Endothelial cell of umbilical vein (primary cell): ENCODE measurements at regions of chr3 and their contacts with region 1.

Region 1: DNA sequence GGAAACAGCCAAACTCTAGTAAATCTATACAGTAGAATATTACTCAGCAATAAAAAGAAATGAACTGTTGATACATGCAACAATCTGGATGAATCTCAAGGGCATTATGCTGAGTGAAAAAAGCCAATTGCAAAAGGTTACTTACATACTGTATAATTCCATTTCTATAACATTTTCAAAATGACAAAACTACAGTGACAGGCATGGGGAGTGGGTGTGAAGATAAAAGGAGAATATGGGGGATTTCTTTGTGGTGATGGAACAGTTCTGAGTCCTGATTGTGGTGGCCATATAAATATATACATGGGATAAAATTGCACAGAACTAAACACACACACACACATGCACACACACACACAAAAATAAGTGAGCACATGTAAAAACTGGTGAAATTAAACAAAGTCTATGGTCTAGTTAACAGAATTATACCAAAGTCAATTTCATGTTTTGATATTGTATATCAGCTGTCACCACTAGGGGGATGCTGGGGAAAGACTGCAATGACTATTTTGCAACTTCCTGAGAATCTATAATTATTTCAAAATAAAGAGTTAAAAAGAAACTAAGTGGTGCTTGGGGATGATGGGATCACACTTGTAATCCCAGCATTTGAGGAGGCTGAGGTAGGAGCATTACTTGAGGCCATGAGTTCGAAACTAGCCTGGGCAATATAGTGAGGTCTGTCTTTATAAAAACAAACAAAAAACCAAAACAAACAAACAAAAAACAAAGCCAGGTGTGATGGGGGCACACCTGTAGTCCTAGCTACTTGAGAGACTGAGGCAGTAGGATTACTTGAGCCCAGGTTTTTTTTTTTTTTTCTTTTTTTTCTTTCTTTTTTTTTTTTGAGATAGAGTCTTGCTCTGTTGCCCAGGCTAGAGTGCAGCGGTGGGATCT is 66.0 kb downstream of the SPTSSB start:
- DNase-seq: peak; percentile 32
- H3K4me3 ChIP-seq: no peak overlapping the region
- H3K27ac ChIP-seq: no peak overlapping the region
- H3K4me1 ChIP-seq: no peaks in the 10 kb centered on the region
- H3K27me3 ChIP-seq: no peaks in the 10 kb centered on the region
- CTCF ChIP-seq: peak; percentile 53 to 59
- POLR2A ChIP-seq: no peak

Region 2: GRCh38 chr3:161409069-161409468 is 103.7 kb after region 1 on chr3:
- CTCF ChIA-PET with region 1: interaction called, 5 read pairs
- POLR2A ChIA-PET with region 1: no interaction called
- dilution Hi-C with region 1: no loop called
- intact Hi-C with region 1: loop called (anchors 1 kb)
- DNase-seq: peak; percentile 61
- H3K4me3 ChIP-seq: no peak overlapping the region
- H3K27ac ChIP-seq: no peak overlapping the region
- H3K4me1 ChIP-seq: no peaks in the 10 kb centered on the region
- H3K27me3 ChIP-seq: no peaks in the 10 kb centered on the region
- CTCF ChIP-seq: peak; percentile 48 to 51
- POLR2A ChIP-seq: no peak